Right ventricle myocardium inferior (tissue), 1 donor: ENCODE measurements at regions of chr1 and their contacts with region 1.

Region 1: DNA sequence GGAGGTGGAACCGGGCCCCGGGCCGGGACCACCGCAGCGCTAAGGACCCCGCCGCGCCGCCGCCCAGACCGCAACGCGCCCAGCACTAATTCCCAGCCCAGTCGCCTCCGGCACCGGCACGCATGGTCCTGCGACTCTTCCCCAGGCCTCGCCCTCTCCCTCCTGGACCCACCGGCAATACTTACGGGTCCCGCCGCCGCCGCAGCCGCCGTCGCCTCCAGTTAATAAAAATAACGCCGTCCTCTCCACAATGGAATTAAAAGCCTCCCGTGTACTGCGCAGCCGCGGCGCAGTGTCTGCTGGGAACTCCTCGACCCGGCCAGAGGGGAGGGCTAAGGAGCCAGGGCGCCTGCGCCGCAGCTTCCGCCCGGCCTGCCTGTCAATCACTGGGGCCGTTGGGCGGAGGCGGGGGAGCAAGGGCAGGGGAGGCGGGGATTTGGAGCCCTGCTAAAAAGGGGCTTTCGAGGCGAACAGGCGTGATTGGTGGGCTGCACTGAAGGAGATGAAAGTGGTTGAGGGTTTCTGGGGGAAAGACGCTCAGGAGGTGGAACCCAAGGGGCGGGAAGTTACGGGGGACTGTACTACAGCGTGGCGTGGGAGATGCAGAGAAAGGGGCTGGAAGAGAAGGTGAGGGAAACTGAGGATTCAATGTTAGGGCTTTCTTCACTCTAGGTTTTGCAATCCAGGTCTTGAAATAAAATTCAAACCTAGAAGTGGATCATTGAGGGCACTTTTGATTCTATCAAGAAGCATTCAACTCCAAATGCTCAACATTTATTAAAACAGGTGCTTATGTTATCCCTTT is at the start of gene ZNF281:
- DNase-seq: peak; percentile 98
- ATAC-seq: peak; percentile 100
- total RNA-seq, gene ZNF281: 8.7 TPM

Region 2: DNA sequence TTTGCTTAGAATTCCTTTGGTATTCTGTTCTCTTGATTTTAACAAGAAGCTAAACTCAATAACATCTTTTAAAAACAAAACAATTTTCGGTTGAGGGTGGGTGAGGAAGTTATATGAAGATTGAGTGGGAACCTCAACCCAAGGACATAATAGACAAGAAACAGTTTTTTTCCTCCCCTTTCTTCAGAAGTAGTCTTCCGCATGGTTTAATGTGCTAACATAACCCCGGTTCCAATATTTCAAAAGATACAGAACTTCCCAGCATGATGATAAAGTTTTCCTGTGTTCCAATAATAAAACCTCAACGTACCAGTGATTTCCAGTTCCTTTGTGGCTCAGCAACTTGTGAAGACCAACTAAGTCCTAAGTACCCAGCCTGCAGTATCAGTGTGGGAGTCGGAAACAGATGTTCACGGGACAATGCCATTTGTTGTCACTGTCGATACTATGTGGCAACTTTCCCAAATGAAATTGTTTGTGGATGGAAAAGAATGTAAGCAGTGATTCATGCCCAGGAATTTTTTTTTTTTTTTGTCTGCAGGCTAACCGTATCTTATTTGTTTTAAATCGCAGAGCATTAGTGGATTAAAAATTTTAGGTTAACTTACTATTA is 333.9 kb before region 1 on chr1:
- intact Hi-C with region 1: loop called (anchors 10 kb)
- DNase-seq: no peak
- ATAC-seq: peak; percentile 71